CD4-positive, alpha-beta T cell (primary cell): ENCODE measurements at regions of chr2 and their contacts with region 1.

Region 1: DNA sequence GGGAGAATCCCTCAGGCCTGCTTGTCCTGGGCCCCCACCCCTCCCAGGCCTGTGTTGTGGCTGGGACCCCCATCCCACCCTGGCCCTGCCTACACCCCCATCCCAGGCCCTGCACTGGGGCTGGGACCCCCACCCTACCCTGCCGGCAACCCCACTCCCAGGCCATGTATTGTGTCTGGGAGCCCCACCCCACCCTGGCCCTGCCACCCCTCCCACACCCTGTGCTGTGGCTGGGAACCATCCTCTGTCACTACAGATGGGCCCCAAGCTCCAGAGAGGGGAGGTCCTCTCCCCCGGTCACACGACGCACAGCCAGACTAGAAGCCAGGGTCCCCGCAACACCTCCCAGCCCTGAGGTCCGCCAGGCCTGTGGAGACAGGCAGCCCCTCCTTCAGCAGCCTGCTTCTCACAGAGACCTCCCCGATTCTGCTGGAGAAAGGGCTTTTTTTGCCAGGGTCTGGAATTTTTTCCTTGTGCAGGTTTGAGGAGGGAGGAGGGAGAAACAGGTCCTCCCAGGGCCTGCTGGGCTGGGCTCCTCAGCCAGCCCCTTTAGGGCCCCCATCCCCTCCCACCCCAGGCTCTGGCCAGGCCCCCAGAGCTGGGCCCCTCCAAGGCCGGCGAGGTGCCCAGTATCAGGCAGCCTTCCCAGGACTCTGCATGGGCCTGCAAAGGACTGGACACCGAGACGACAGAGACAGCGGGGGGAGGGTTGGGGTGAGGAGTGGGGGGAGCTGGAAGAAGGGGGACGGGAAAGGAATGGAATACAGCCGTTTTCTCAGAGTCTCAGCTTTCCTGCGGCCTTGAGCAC is 28.0 kb downstream of the KIF1A start:
- DNase-seq: peak in 1 of 14 experiments; percentile 2
- ATAC-seq: no peak
- H3K4me3 ChIP-seq: no peak overlapping the region
- H3K4me3 Mint-ChIP-seq: no peak overlapping the region
- H3K27ac ChIP-seq: no peak overlapping the region
- H3K27ac Mint-ChIP-seq: no peak overlapping the region
- H3K4me1 ChIP-seq: no peaks in the 10 kb centered on the region
- H3K4me1 Mint-ChIP-seq: no peaks in the 10 kb centered on the region
- H3K27me3 ChIP-seq: no peaks in the 10 kb centered on the region
- H3K27me3 Mint-ChIP-seq: peaks cover 15% of the 10 kb centered on the region
- CTCF ChIP-seq: no peak

Region 2: DNA sequence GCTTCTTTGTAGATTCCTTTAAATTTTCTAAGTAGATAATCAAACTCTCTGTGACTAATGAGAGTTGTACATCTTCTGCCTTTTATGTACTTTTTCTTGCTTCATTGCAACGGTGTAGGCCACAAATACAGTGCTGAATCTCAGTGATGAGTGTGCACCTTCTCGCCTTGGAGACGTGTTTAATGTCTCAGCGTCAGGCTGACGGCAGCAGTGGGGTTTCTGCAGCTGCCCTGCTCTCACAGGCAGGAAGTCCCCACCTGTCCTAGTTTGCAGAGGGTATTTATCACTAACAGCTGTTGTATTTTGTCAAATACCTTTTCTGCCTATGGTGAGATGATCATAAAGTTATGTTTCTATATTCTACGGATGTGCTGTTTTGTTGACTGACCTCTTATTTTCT is 89.9 kb after region 1 on chr2:
- CTCF ChIA-PET with region 1: no interaction called
- POLR2A ChIA-PET with region 1: no interaction called
- intact Hi-C with region 1: loop called in 1 of 2 experiments (anchors 10 kb)
- DNase-seq: peak in 1 of 14 experiments; percentile 9
- ATAC-seq: no peak
- H3K4me3 ChIP-seq: no peak overlapping the region
- H3K4me3 Mint-ChIP-seq: no peak overlapping the region
- H3K27ac ChIP-seq: no peak overlapping the region
- H3K27ac Mint-ChIP-seq: no peak overlapping the region
- H3K4me1 ChIP-seq: no peaks in the 10 kb centered on the region
- H3K4me1 Mint-ChIP-seq: no peaks in the 10 kb centered on the region
- H3K27me3 ChIP-seq: no peaks in the 10 kb centered on the region
- H3K27me3 Mint-ChIP-seq: peaks cover 5% of the 10 kb centered on the region
- CTCF ChIP-seq: no peak